ENCODE measurements at regions of chr15 and their contacts with region 1.

Region 1: GRCh38 chr15:52227456-52227855 is 36.3 kb upstream of the GNB5 start:
- DNase-seq: peak; percentile 66
- ATAC-seq: peak; percentile 90
- H3K4me3 ChIP-seq: no peak overlapping the region
- H3K27ac ChIP-seq: no peak overlapping the region
- H3K4me1 ChIP-seq: peaks cover 36% of the 10 kb centered on the region
- H3K27me3 ChIP-seq: no peaks in the 10 kb centered on the region
- CTCF ChIP-seq: peak; percentile 79 to 87 (median 81)
- EP300 ChIP-seq: no peak
- POLR2A ChIP-seq: no peak
- RAD21 ChIP-seq: peak; percentile 79

Region 2: DNA sequence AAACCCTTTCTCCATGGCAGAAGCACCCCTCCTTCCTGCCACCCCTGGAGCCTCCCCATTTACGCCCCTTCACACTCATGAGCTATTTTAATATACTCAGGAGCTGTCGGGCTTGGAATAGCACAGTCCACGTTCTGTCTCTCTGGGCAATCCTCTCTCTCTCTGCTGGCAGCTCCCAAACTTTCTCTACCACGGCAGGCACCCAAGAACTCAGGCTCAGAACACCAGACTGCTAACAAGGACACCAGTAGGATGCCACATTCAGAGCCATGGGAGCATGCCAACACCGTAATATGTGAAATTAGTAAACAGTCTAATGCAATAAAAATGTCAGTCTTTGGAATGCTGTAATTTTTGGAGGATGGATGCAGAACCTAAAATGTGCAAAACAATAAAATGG is 1152.1 kb before region 1 on chr15:
- CTCF ChIA-PET with region 1: no interaction called
- POLR2A ChIA-PET with region 1: no interaction called
- RAD21 ChIA-PET with region 1: no interaction called
- SMC1A ChIA-PET with region 1: no interaction called
- in situ Hi-C with region 1: no loop called
- intact Hi-C with region 1: no loop called
- DNase-seq: no peak
- ATAC-seq: no peak
- H3K4me3 ChIP-seq: no peak overlapping the region
- H3K27ac ChIP-seq: no peak overlapping the region
- H3K4me1 ChIP-seq: peaks cover 24% of the 10 kb centered on the region
- H3K27me3 ChIP-seq: no peaks in the 10 kb centered on the region
- CTCF ChIP-seq: no peak
- EP300 ChIP-seq: no peak
- POLR2A ChIP-seq: no peak
- RAD21 ChIP-seq: no peak

Region 3: GRCh38 chr15:52163321-52164190 is 63.9 kb before region 1 on chr15:
- CTCF ChIA-PET with region 1: interaction called, 38 read pairs
- POLR2A ChIA-PET with region 1: no interaction called
- RAD21 ChIA-PET with region 1: interaction called, 3 read pairs
- SMC1A ChIA-PET with region 1: interaction called, 11 read pairs
- in situ Hi-C with region 1: no loop called
- intact Hi-C with region 1: no loop called
- DNase-seq: no peak
- ATAC-seq: peak; percentile 71
- H3K4me3 ChIP-seq: no peak overlapping the region
- H3K27ac ChIP-seq: no peak overlapping the region
- H3K4me1 ChIP-seq: no peaks in the 10 kb centered on the region
- H3K27me3 ChIP-seq: no peaks in the 10 kb centered on the region
- CTCF ChIP-seq: peak; percentile 15 to 43 (median 32); a peak in 4 of 6 replicates
- EP300 ChIP-seq: no peak
- POLR2A ChIP-seq: no peak
- RAD21 ChIP-seq: 0 out of 2 replicates have a peak, but pooled peaks have one; percentile 14

Region 4: DNA sequence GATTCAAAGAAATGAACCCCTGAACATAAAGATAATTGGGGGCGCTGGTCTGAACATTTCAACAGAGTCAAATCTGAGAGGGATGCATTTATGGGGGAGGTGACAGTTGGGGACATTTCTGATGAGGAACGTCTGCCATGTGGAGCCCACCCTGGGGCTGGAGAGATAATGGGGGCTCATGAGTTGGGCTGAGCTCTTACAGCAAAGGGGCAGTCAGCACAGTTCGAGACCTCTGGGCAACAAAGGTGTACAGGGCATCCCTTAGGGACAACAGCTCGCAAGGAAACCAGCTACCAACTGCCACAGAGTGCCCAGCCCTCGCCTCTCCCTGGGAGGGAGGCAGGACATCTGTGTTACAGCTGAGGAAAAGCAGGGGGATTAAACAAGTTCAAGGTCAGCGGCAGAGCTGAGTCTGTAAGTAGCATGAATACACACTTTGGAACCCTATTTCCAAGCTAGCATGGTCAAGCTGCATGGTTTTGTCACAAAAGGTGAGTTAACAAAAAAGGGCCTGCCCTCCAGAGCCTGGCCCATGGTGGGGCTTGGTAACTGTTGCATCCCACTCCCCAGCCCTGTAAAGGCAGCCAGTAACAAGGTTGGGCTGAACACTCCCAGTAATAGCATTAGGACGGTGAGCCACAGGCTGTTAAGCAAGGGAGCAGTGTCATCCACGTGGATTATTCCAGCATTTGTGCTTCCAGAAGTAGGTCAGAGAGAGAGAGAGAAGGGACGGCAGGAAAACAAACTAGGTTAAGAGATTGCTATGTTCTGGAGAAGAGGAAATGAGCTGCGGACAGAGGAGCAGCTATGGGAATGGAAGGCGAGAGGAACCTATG is 40.6 kb before region 1 on chr15:
- CTCF ChIA-PET with region 1: interaction called, 235 read pairs
- POLR2A ChIA-PET with region 1: interaction called, 3 read pairs
- RAD21 ChIA-PET with region 1: interaction called, 43 read pairs
- SMC1A ChIA-PET with region 1: interaction called, 93 read pairs
- in situ Hi-C with region 1: no loop called
- intact Hi-C with region 1: loop called (anchors 1 kb)
- DNase-seq: no peak
- ATAC-seq: no peak
- H3K4me3 ChIP-seq: no peak overlapping the region
- H3K27ac ChIP-seq: no peak overlapping the region
- H3K4me1 ChIP-seq: no peaks in the 10 kb centered on the region
- H3K27me3 ChIP-seq: no peaks in the 10 kb centered on the region
- CTCF ChIP-seq: no peak
- EP300 ChIP-seq: no peak
- POLR2A ChIP-seq: no peak
- RAD21 ChIP-seq: no peak

Region 5: GRCh38 chr15:52217186-52217585 is 10.3 kb before region 1 on chr15:
- CTCF ChIA-PET with region 1: interaction called, 207 read pairs
- POLR2A ChIA-PET with region 1: interaction called, 3 read pairs
- RAD21 ChIA-PET with region 1: interaction called, 40 read pairs
- SMC1A ChIA-PET with region 1: interaction called, 80 read pairs
- in situ Hi-C with region 1: no loop called
- intact Hi-C with region 1: no loop called
- DNase-seq: no peak
- ATAC-seq: peak; percentile 74
- H3K4me3 ChIP-seq: no peak overlapping the region
- H3K27ac ChIP-seq: no peak overlapping the region
- H3K4me1 ChIP-seq: peaks cover 15% of the 10 kb centered on the region
- H3K27me3 ChIP-seq: no peaks in the 10 kb centered on the region
- CTCF ChIP-seq: peak; percentile 57 to 73 (median 58)
- EP300 ChIP-seq: no peak
- POLR2A ChIP-seq: no peak
- RAD21 ChIP-seq: peak; percentile 43; the same call in 1 of the 2 replicates

Measured in GM12878 (cell line).